PC-9 (cell line): ENCODE measurements at regions of chr2 and their contacts with region 1.

Region 1: DNA sequence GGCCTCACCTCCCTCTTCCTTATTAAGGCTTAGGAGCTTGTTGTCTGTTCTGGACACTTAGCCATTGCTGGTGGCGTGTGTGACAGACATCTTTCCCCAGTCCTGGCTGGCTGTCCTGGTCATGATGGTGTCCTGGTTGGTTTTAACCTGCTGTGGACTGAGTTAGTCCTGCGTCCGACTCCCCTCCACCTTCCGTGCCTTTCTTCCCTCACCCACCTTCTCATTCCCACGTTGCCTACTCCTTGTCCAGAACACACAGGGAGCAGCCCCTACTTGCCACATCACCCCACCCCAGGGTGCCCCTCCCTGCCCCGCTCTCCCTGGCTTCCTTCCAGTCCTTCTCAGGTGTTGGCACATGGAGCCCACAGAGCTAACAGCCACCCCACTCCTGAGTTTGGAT is 9.5 kb downstream of the ANO7 start:
- DNase-seq: no peak
- H3K4me3 ChIP-seq: no peak overlapping the region
- H3K27ac ChIP-seq: no peak overlapping the region
- H3K4me1 ChIP-seq: no peaks in the 10 kb centered on the region
- H3K27me3 ChIP-seq: 0 out of 2 replicates have a peak, but pooled peaks cover 12% of the 10 kb centered on the region
- CTCF ChIP-seq: no peak

Region 2: DNA sequence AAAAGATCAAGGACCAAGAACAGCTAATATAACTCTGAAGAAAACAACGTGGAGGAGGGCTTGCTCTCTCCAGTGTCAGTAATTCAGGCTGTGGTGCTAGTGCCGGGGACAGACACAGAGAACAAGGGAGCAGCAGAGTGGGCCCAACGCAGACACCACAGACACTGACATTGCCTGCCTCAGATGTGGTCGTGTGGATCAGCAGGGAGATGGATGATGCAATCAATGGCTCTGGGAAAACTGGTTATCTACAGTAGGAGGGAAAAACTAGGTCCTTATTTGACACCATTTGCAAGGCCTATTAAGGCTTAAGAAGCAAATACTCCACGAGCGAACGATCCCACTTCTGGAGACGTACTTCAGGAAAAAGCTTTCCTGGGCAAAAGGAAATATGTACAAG is 81.5 kb after region 1 on chr2:
- CTCF ChIA-PET with region 1: interaction called, 18 read pairs
- POLR2A ChIA-PET with region 1: no interaction called
- intact Hi-C with region 1: no loop called
- DNase-seq: no peak
- H3K4me3 ChIP-seq: no peak overlapping the region
- H3K27ac ChIP-seq: no peak overlapping the region
- H3K4me1 ChIP-seq: 0 out of 2 replicates have a peak, but pooled peaks cover 7% of the 10 kb centered on the region
- H3K27me3 ChIP-seq: no peaks in the 10 kb centered on the region
- CTCF ChIP-seq: no peak